ENCODE measurements at regions of chr3 and their contacts with region 1.

Region 1: DNA sequence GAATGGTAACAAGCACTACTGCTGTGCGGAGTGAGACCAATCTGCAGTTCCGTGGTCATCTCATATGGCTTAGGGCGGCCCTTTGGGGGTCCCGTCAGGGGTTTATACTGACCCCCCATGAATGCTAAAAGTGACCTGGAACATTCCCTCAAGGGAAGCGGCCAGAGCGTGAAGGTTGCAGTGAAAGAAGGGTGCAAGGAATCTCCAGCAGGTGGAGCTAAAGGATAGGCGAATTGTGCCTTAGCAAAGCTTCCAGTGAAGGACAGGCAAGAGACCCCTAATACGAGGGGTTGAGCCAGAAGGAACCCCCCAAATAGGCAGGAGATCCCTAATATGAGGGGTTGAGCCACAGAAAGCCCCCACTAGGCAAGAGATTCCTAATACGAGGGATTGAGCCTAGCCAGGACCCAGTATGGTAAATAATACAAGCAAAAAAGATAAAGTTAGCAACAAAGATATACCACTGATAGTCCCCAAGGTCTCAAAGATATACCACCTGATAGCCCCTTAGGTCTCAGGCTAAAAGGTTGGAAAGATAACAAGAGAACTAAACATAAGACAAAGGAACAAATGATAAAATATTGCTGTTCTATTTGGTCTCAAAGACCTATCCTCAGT is 32.8 kb downstream of the ZNF589 start:
- DNase-seq: peak; percentile 39 to 73
- H3K4me3 ChIP-seq: no peak overlapping the region
- H3K27ac ChIP-seq: no peak overlapping the region
- H3K4me1 ChIP-seq: peaks cover 0 to 26% (median 18%) of the 10 kb centered on the region in 4 experiments; a peak in 5 of 7 replicates
- H3K27me3 ChIP-seq: no peaks in the 10 kb centered on the region
- CTCF ChIP-seq: peak; percentile 63 to 81 (median 77)
- EP300 ChIP-seq: no peak
- POLR2A ChIP-seq: no peak; a peak in 1 of 3 replicates
- RAD21 ChIP-seq: peak; percentile 88 to 91

Region 2: DNA sequence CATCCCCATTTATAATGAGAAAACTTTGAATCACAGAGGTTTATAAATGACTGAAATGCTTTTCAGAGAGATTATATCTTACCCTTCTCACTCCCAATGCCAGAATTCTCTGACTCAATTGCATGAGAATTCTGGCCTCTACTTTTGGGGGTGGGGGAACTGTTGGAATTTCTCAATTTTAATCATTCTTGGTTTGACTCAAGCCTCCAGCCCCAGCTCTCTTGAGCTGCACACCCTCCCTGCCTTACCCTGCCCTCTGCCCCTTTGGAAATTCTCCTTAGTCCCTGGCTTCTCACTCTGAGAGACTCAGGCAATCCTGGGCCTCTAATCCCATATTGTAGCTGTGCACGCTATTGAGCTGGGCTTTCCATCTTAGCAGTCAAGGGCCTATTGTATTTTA is 11.4 kb after region 1 on chr3:
- CTCF ChIA-PET with region 1: interaction called, 8 read pairs
- POLR2A ChIA-PET with region 1: interaction called, 20 read pairs
- DNase-seq: no peak
- H3K4me3 ChIP-seq: no peak overlapping the region
- H3K27ac ChIP-seq: no peak overlapping the region
- H3K4me1 ChIP-seq: no peaks in the 10 kb centered on the region
- H3K27me3 ChIP-seq: no peaks in the 10 kb centered on the region; a peak in 1 of 7 replicates
- CTCF ChIP-seq: no peak
- EP300 ChIP-seq: no peak
- POLR2A ChIP-seq: no peak
- RAD21 ChIP-seq: no peak

Region 3: GRCh38 chr3:48301020-48301796 is 27.5 kb after region 1 on chr3:
- CTCF ChIA-PET with region 1: interaction called, 6 read pairs
- POLR2A ChIA-PET with region 1: interaction called, 18 read pairs
- DNase-seq: peak; percentile 73 to 97
- H3K4me3 ChIP-seq: peak within 1 kb of the TSS; percentile 67 to 96 (median 78)
- H3K27ac ChIP-seq: peak within 1 kb of the TSS; percentile 79
- H3K4me1 ChIP-seq: no peaks in the 10 kb centered on the region; a peak in 1 of 7 replicates
- H3K27me3 ChIP-seq: peaks cover 0 to 8% (median 2%) of the 10 kb centered on the region in 4 experiments; a peak in 2 of 7 replicates
- CTCF ChIP-seq: no peak
- EP300 ChIP-seq: no peak
- POLR2A ChIP-seq: peak; percentile 76 to 82
- RAD21 ChIP-seq: peak; percentile 7 to 25; a peak in 1 of 4 replicates

Region 4: DNA sequence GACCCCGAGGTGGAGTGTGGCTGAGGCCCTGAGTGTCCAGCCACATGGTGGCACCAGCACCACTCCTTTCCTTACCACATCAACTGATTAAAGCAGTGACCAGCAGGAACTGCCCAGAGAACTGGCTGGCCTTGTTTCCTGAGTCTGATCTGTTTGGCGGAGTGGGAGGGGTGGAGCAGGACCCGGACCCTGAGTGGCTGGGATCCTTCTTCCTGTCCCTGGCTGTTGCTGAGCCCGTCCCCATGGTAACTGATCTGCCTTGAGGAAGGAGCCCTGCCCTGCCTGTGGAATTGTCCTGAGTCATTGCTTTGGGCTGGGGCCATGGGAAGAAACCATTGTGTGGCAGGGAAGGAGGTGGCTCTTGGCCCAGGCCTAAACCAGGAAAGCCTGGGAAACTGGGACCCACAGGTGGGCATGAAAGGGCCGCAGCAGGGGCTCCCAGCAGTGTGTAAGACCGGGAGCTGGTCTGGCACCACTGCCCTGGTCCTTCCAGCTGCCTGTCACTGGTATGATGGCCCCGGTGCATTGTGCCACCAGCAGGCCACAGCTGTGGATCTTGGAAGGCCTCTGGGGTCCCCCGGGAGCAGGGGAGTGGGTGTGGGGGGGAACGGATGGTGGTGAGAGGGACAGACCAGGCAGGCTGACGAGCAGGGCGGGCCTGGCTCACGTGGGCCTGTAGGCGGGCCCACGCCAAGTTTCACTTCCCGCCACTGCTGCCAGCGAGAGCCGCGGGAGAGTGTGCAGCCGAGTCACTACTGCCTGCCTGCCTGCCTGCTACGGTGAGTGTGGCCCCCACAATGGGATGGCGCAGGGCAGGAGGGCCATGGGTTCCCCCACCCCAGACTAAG is 192.1 kb after region 1 on chr3:
- CTCF ChIA-PET with region 1: no interaction called
- POLR2A ChIA-PET with region 1: no interaction called
- DNase-seq: peak; percentile 87 to 94
- H3K4me3 ChIP-seq: no peak overlapping the region; a peak in 1 of 8 replicates
- H3K27ac ChIP-seq: peak overlapping the region; percentile 88
- H3K4me1 ChIP-seq: peaks cover 0 to 25% (median 14%) of the 10 kb centered on the region in 4 experiments; a peak in 5 of 7 replicates
- H3K27me3 ChIP-seq: no peaks in the 10 kb centered on the region
- CTCF ChIP-seq: peak in 2 of 3 experiments; percentile 87 to 92; a peak in 3 of 4 replicates
- EP300 ChIP-seq: peak in 1 of 2 experiments; percentile 72; a peak in 1 of 3 replicates
- POLR2A ChIP-seq: no peak
- RAD21 ChIP-seq: peak; percentile 93